Transverse colon (tissue), 4 donors: ENCODE measurements at regions of chr15 and their contacts with region 1.

Region 1: GRCh38 chr15:50726315-50726714 is 39.2 kb downstream of the SPPL2A start:
- DNase-seq: no peak
- H3K4me3 ChIP-seq: no peak overlapping the region
- H3K27ac ChIP-seq: no peak overlapping the region
- H3K4me1 ChIP-seq: no peaks in the 10 kb centered on the region
- H3K27me3 ChIP-seq: no peaks in the 10 kb centered on the region
- CTCF ChIP-seq: no peak
- EP300 ChIP-seq: no peak
- POLR2A ChIP-seq: no peak

Region 2: GRCh38 chr15:50653156-50653745 is 73.1 kb before region 1 on chr15:
- in situ Hi-C with region 1: no loop called
- intact Hi-C with region 1: loop called (anchors 2 kb)
- DNase-seq: no peak
- H3K4me3 ChIP-seq: no peak overlapping the region
- H3K27ac ChIP-seq: no peak overlapping the region
- H3K4me1 ChIP-seq: no peaks in the 10 kb centered on the region
- H3K27me3 ChIP-seq: no peaks in the 10 kb centered on the region
- CTCF ChIP-seq: no peak
- EP300 ChIP-seq: no peak
- POLR2A ChIP-seq: no peak